OCI-LY7 (cell line): ENCODE measurements at regions of chr5 and their contacts with region 1.

Region 1: GRCh38 chr5:124706729-124707361 is 39.6 kb downstream of the ZNF608 start:
- DNase-seq: peak; percentile 53
- H3K4me3 ChIP-seq: peak overlapping the region; percentile 66
- H3K27ac ChIP-seq: peak overlapping the region; percentile 95
- H3K4me1 ChIP-seq: peaks cover 95% of the 10 kb centered on the region
- CTCF ChIP-seq: no peak

Region 2: DNA sequence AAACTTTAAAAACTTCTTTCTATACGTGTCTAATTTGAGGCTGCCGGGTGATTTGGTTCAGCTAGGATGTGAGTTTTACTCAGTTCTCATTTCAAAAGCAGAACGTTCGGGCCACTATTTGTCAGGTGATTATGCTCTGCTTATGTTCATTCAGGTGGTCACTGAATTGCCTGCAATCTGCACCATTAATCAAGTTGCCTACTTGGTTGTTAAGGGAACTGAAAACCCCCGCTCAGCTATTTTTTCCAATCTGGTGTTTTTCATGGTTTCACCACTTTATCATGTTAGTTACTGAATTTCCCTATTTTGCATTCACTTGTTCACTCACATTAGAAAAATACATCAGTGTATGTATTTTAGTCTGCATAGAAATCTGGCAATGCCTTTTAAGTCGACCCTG is 671.9 kb before region 1 on chr5:
- CTCF ChIA-PET with region 1: no interaction called
- POLR2A ChIA-PET with region 1: interaction called, 4 read pairs
- intact Hi-C with region 1: loop called (anchors 10 kb)
- DNase-seq: peak; percentile 90
- H3K4me3 ChIP-seq: peak overlapping the region; percentile 46
- H3K27ac ChIP-seq: peak overlapping the region; percentile 92
- H3K4me1 ChIP-seq: peaks cover 49% of the 10 kb centered on the region
- CTCF ChIP-seq: no peak

Region 3: DNA sequence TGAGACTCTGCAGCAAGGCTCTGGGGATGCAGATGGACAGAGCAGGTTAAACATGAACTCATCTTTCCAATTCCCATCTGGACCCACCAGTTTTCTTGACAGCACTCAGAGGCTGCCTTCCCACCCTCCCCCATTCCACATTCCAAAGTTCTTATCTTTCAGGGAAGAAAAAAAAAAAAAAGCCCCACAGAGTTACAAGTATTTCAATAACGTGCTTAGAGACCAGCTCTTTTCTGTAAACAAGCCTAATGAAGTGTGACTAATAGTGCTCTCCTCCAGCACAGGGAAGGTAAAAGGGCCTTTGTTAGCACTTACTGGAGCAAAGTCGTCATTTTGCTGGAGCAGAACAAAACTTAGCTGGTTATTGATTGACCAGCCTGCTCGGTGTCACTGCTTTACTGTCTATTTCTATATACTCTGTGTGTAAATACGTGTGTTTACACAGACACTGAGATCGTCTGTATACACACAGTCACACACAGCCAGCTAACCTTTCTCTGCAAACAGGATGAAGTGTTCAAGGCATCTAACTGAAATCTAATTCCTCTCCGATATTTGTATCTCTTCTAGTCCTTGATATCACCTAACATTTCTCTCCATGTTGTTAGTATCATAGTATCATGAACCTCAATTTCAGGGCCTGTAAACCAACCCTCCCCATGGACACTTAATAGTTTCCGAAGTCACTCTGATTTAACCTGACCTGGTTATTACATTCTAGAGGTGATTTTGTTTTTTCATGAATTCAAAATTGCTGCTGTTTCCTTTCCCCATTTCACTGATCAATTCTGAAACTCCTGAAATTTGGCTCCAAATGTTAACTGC is 45.3 kb before region 1 on chr5:
- CTCF ChIA-PET with region 1: interaction called, 6 read pairs
- POLR2A ChIA-PET with region 1: interaction called, 11 read pairs
- intact Hi-C with region 1: no loop called
- DNase-seq: no peak
- H3K4me3 ChIP-seq: peak overlapping the region; percentile 27
- H3K27ac ChIP-seq: peak overlapping the region; percentile 4
- H3K4me1 ChIP-seq: peaks cover 66% of the 10 kb centered on the region
- CTCF ChIP-seq: no peak

Region 4: GRCh38 chr5:124718380-124718789 is 11.5 kb after region 1 on chr5:
- CTCF ChIA-PET with region 1: interaction called, 4 read pairs
- POLR2A ChIA-PET with region 1: interaction called, 112 read pairs
- intact Hi-C with region 1: no loop called
- DNase-seq: no peak
- H3K4me3 ChIP-seq: peak overlapping the region; percentile 61
- H3K27ac ChIP-seq: peak overlapping the region; percentile 71
- H3K4me1 ChIP-seq: peaks cover 88% of the 10 kb centered on the region
- CTCF ChIP-seq: no peak

Region 5: DNA sequence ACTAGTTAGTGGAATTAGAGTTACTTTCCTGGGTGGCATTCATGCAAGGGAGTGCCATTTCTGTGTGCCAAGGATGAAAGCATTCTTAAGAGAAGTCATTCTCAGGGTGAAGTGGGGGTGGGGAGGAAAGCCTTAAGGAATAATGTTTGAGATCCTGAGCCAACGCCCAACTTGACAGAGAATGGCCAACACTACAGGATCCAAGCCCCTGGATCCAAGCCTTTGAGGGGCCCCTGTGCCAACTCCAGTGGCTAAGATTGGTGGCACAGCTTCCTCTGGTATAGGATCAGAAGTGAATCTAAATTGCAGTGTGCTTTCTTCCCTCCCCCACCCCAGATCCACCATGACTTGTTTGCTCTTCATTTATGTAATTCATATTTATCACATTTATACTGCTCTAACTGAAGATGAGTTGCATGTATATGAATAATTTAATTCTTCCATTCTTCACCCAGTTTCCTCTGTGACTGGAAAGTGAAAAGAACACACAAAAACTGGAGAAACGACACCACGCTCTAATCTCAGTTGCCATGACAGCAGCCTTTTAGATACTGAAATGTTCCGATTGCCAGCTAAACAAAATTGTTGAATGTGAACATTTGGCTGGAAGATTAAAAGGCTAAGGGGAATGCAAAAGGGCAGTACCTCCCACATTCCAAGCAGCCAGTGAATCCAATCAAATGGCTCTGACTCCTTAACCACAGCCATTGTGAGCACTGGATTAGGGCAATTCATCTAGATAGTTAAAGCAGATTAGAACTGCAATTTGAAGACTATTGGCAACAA is 35.1 kb after region 1 on chr5:
- CTCF ChIA-PET with region 1: no interaction called
- POLR2A ChIA-PET with region 1: interaction called, 132 read pairs
- intact Hi-C with region 1: loop called (anchors 1 kb)
- DNase-seq: peak; percentile 44
- H3K4me3 ChIP-seq: peak overlapping the region; percentile 85
- H3K27ac ChIP-seq: peak overlapping the region; percentile 97
- H3K4me1 ChIP-seq: peaks cover 52% of the 10 kb centered on the region
- CTCF ChIP-seq: no peak